Colonic mucosa (tissue), 4 donors: ENCODE measurements at regions of chr3 and their contacts with region 1.

Region 1: GRCh38 chr3:113287803-113288648 is 76.7 kb downstream of the BOC start:
- DNase-seq: peak; percentile 70
- H3K4me3 ChIP-seq: no peak overlapping the region
- H3K27ac ChIP-seq: no peak overlapping the region
- H3K4me1 ChIP-seq: no peaks in the 10 kb centered on the region
- H3K27me3 ChIP-seq: no peaks in the 10 kb centered on the region
- CTCF ChIP-seq: peak; percentile 96

Region 2: DNA sequence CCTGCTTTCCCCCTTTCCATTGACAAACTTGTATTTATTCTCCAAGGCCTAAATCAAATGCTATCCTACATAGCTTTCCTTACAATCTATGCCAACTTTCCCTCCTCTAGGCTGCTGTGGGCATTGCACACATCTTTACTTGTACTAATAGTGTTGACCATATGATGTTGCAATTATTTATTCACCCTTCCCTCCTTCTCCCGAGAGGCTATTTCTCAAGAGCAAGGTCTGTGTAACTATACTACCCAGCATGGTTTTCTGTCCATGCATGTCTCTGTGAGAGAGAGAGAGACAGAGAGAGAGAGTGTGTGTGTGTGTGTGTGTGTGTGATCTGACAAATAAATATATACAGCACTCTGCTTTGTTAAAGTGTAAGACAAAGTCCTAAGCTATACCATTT is 233.5 kb before region 1 on chr3:
- intact Hi-C with region 1: loop called (anchors 2 kb)
- DNase-seq: no peak
- H3K4me3 ChIP-seq: no peak overlapping the region
- H3K27ac ChIP-seq: no peak overlapping the region
- H3K4me1 ChIP-seq: no peaks in the 10 kb centered on the region
- H3K27me3 ChIP-seq: no peaks in the 10 kb centered on the region
- CTCF ChIP-seq: no peak

Region 3: DNA sequence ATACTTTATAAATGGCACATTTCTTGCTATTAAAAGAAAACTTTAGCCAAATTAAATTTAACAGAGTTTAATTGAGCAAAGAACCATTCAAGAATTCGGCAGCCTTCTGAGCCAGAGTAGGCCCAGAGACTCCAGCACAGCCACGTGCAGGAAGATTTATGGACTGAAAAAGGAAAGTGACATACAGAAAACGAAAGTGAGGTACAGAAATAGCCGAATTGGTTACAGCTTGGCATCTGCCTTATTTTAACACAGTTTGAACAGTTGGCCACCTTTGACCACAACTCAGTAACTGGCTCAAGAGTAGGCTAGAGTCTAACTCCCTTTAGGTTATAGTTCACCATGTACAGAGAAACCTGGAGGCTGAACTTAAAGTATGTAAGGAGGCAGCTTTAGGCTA is 135.7 kb after region 1 on chr3:
- intact Hi-C with region 1: no loop called
- DNase-seq: no peak
- H3K4me3 ChIP-seq: no peak overlapping the region
- H3K27ac ChIP-seq: no peak overlapping the region
- H3K4me1 ChIP-seq: no peaks in the 10 kb centered on the region
- H3K27me3 ChIP-seq: no peaks in the 10 kb centered on the region
- CTCF ChIP-seq: no peak

Region 4: GRCh38 chr3:113565555-113565954 is 277.5 kb after region 1 on chr3:
- intact Hi-C with region 1: no loop called
- DNase-seq: no peak
- H3K4me3 ChIP-seq: no peak overlapping the region
- H3K27ac ChIP-seq: no peak overlapping the region
- H3K4me1 ChIP-seq: no peaks in the 10 kb centered on the region
- H3K27me3 ChIP-seq: no peaks in the 10 kb centered on the region
- CTCF ChIP-seq: no peak